Dendritic cell treated with granulocyte-macrophage colony-stimulating factor and Interleukin-4, amounts not matched to agents 40 ng/mL and 50 ng/mL, for 4 days (primary cell): ENCODE measurements at regions of chr9 and their contacts with region 1.

Region 1: GRCh38 chr9:92716557-92716956 is 46.6 kb upstream of the IPPK start:
- H3K4me3 Mint-ChIP-seq: no peak overlapping the region
- H3K27ac Mint-ChIP-seq: no peak overlapping the region
- H3K4me1 Mint-ChIP-seq: peaks cover 35% of the 10 kb centered on the region
- H3K27me3 Mint-ChIP-seq: no peaks in the 10 kb centered on the region

Region 2: DNA sequence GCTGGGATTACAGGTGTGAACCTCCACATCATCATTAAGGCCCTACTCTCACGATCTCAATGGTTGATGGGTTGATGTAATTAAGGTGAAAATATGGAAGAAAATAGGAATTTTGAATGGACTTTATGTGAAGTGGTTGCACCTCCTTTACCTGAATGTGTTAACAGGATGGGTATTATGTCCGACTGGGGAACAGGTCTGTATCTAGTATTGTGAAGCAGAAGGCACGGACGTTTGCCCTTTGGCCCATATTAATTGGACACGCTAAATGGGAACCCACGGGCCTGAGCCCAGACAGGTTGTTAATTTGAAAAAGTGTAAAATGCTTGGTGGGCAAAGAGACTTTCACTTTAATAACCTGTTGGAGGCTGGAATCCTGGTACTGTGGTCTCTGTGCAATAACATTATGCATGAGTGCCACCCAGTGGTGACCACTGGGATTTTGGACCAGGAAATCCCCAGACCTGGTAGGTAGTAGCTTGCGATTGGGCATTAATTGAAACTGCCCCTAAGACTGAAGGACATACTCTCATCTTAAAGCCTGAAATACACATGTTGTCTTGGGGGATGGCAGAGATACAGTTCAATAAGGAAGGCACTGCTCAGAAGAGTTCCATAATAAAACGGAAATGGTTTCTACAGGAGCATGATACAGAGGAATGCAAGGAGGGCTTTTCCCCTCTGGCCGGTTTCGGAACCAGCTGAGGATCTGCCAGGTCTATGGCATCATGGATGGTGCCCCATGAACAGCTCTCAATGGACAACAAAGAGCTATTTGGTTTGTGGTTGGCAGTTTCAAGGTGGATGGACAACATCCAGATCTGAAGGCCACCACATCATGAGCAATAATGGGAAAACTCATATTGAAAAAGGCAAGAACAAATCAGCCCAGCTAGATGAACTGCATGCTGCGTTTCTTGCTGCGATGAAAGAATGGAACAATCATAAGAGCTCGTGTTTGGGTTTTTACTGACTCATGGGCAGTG is 74.3 kb after region 1 on chr9:
- intact Hi-C with region 1: loop called (anchors 1 kb)
- H3K4me3 Mint-ChIP-seq: no peak overlapping the region
- H3K27ac Mint-ChIP-seq: no peak overlapping the region
- H3K4me1 Mint-ChIP-seq: peaks cover 8% of the 10 kb centered on the region
- H3K27me3 Mint-ChIP-seq: peaks cover 3% of the 10 kb centered on the region

Region 3: DNA sequence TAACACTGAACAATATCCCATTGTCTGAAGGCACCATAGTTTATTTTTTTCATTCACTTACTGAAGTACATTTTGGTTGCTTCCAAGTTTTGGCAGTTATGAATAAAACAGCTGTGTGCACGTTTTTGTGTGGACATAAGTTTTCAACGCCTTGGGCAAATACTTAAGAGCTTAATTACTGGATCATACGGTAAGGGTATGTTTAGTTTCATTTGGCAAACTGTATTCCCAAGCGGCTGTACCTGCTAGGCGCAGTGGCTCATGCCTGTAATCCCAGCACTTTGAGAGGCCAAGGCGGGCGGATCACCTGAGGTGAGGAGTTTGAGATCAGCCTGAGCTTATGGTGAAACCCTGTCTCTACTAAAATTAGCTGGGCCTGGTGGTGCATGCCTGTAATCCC is 671.2 kb after region 1 on chr9:
- intact Hi-C with region 1: no loop called
- H3K4me3 Mint-ChIP-seq: no peak overlapping the region
- H3K27ac Mint-ChIP-seq: no peak overlapping the region
- H3K4me1 Mint-ChIP-seq: no peaks in the 10 kb centered on the region
- H3K27me3 Mint-ChIP-seq: peaks cover 6% of the 10 kb centered on the region